ENCODE measurements at regions of chr18 and their contacts with region 1.

Region 1: DNA sequence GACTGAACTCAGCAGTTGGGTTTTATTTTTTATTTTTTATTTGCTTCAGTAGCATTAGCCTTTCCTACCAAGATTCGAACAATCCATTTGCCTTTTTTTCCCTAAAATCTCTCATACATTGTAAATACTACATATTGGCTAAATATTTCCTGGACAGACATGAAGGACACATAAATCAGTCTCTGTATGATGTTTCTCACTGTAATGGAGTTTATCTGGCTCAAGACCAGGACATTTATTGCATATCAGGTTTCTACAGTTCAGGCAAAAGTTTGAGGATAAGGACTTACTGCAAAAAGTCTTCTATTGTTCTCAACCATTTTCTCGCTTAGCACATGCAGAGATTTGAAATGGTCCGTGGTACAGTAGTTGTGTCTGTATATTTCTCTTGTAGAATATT is 3.3 kb downstream of the CLUL1 start:
- DNase-seq: no peak
- ATAC-seq: no peak
- H3K4me3 ChIP-seq: no peak overlapping the region
- H3K27ac ChIP-seq: no peak overlapping the region
- H3K4me1 ChIP-seq: peaks cover 0 to 1% of the 10 kb centered on the region in 2 donors
- H3K27me3 ChIP-seq: no peaks in the 10 kb centered on the region

Region 2: GRCh38 chr18:551404-552061 is 48.6 kb before region 1 on chr18:
- intact Hi-C with region 1: loop called in 1 of 2 experiments (anchors 5 kb)
- DNase-seq: no peak
- ATAC-seq: no peak
- H3K4me3 ChIP-seq: no peak overlapping the region
- H3K27ac ChIP-seq: no peak overlapping the region
- H3K4me1 ChIP-seq: no peaks in the 10 kb centered on the region
- H3K27me3 ChIP-seq: no peaks in the 10 kb centered on the region